Dendritic cell treated with granulocyte-macrophage colony-stimulating factor and Interleukin-4, amounts not matched to agents 40 ng/mL and 50 ng/mL, for 4 days (primary cell): ENCODE measurements at regions of chr2 and their contacts with region 1.

Region 1: DNA sequence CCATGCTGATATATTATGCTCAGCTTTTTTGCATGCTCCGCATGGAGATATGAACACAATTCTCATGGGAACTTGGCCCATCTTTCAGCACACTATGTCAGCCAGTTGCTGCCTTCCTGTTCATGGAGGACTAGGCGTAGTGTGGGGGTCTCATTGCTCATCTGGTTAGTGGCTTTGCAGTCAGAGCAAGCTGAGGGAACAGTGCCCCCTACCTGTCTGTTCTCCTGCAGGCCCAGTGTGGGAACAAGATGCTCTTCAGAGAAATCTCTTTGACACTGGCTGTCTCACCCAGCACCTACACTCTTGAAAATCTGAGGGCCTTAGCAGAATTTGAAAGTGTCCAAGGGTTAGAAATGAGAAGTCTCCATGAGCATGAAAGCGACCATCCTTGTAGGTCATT is 47.1 kb downstream of the SPTBN1 start:
- H3K4me3 Mint-ChIP-seq: no peak overlapping the region
- H3K27ac Mint-ChIP-seq: no peak overlapping the region
- H3K4me1 Mint-ChIP-seq: no peaks in the 10 kb centered on the region
- H3K27me3 Mint-ChIP-seq: no peaks in the 10 kb centered on the region

Region 2: GRCh38 chr2:54106631-54107454 is 396.3 kb before region 1 on chr2:
- intact Hi-C with region 1: loop called (anchors 5 kb)
- H3K4me3 Mint-ChIP-seq: no peak overlapping the region
- H3K27ac Mint-ChIP-seq: no peak overlapping the region
- H3K4me1 Mint-ChIP-seq: no peaks in the 10 kb centered on the region
- H3K27me3 Mint-ChIP-seq: peaks cover 2% of the 10 kb centered on the region

Region 3: DNA sequence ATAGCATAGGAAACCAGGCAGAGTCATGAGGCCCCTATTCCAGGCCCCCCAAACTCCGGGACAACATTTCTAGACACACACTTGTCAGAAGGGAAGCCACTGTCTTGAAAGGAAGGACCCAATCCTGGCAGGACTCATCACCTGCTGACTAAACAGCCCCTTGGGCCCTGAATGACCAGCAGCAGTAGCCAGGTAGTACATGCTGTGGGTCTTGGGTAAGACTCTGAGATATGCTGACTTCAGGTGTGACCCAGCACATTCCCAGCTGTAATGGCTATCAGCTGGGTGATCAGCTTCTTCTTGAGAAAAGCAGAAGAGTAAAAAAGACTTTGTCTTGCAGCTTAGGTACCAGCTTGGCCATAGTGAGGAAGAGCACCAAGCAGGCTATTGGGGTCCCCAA is 693.3 kb after region 1 on chr2:
- intact Hi-C with region 1: no loop called
- H3K4me3 Mint-ChIP-seq: no peak overlapping the region
- H3K27ac Mint-ChIP-seq: no peak overlapping the region
- H3K4me1 Mint-ChIP-seq: no peaks in the 10 kb centered on the region
- H3K27me3 Mint-ChIP-seq: no peaks in the 10 kb centered on the region